IMR-90 (cell line): ENCODE measurements at regions of chr2 and their contacts with region 1.

Region 1: DNA sequence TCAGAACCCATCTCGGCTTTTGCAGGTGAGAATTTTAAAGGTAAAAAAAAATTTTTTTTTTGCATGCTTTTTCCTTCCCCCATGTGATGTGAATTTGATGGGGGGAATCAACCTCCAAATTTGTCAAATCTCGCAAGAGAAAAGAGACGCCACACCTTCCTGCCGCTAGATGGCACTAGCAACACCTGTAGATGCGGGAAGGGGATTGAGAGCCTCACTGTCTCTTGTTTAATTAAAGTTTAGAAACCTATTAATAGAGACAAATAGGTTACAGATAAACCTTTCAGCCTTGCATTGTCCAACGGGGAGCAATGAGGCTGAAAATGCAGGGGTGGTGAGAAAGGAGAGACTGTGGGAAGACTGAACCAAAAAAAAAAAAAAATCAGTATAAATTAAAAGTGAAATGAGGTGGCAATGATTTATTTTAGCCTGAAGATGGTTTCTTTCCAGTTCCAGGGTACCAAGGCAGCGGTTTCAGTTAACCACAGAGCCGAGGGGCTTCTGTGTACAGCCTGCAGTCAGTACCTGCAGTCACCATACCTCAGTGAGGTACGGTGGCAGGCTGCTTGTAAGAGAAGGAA is 84.6 kb downstream of the NRP2 start:
- DNase-seq: peak; percentile 72
- ATAC-seq: no peak
- H3K4me3 ChIP-seq: no peak overlapping the region
- H3K27ac ChIP-seq: no peak overlapping the region
- H3K4me1 ChIP-seq: peaks cover 33% of the 10 kb centered on the region
- H3K27me3 ChIP-seq: no peaks in the 10 kb centered on the region
- CTCF ChIP-seq: peak; percentile 85
- POLR2A ChIP-seq: no peak
- RAD21 ChIP-seq: peak; percentile 78

Region 2: GRCh38 chr2:205590759-205591158 is 176.1 kb before region 1 on chr2:
- CTCF ChIA-PET with region 1: no interaction called
- POLR2A ChIA-PET with region 1: no interaction called
- dilution Hi-C with region 1: no loop called
- in situ Hi-C with region 1: no loop called
- intact Hi-C with region 1: no loop called
- DNase-seq: peak; percentile 70
- ATAC-seq: peak; percentile 75
- H3K4me3 ChIP-seq: no peak overlapping the region
- H3K27ac ChIP-seq: no peak overlapping the region
- H3K4me1 ChIP-seq: peaks cover 10% of the 10 kb centered on the region
- H3K27me3 ChIP-seq: no peaks in the 10 kb centered on the region
- CTCF ChIP-seq: no peak
- POLR2A ChIP-seq: no peak
- RAD21 ChIP-seq: no peak

Region 3: GRCh38 chr2:205685314-205686055 is 81.4 kb before region 1 on chr2:
- CTCF ChIA-PET with region 1: no interaction called
- POLR2A ChIA-PET with region 1: no interaction called
- dilution Hi-C with region 1: no loop called
- in situ Hi-C with region 1: no loop called
- intact Hi-C with region 1: loop called (anchors 2 kb)
- DNase-seq: peak; percentile 67
- ATAC-seq: peak; percentile 33
- H3K4me3 ChIP-seq: peak overlapping the region; percentile 90
- H3K27ac ChIP-seq: peak overlapping the region; percentile 90
- H3K4me1 ChIP-seq: peaks cover 12% of the 10 kb centered on the region
- H3K27me3 ChIP-seq: no peaks in the 10 kb centered on the region
- CTCF ChIP-seq: 0 out of 2 replicates have a peak, but pooled peaks have one; percentile 1
- POLR2A ChIP-seq: peak; percentile 1; the same call in 1 of the 2 replicates
- RAD21 ChIP-seq: no peak; the same call in 1 of the 2 replicates

Region 4: DNA sequence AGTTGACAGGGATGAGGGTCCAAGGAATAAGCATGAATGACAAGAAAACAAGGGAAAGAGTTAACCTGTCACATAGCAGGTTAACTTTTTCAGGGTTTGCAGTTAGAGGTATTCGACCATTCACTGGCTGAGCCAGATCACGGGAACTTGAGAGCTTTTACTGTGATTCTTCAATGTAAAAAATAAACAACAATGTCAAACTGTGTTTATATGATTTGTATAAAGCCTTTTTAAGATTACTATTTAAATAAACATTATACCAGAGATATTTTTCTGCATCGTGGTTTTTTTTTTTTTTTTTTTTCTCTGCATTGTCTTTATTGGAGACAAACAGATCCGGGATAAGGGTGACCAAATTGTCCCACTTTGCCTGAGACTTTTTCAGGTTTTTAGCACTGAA is 31.0 kb after region 1 on chr2:
- CTCF ChIA-PET with region 1: no interaction called
- POLR2A ChIA-PET with region 1: interaction called, 11 read pairs
- dilution Hi-C with region 1: no loop called
- in situ Hi-C with region 1: no loop called
- intact Hi-C with region 1: no loop called
- DNase-seq: peak; percentile 52
- ATAC-seq: peak; percentile 44
- H3K4me3 ChIP-seq: no peak overlapping the region
- H3K27ac ChIP-seq: peak overlapping the region; percentile 95; the same call in 1 of the 2 replicates
- H3K4me1 ChIP-seq: peaks cover 28% of the 10 kb centered on the region
- H3K27me3 ChIP-seq: no peaks in the 10 kb centered on the region
- CTCF ChIP-seq: no peak
- POLR2A ChIP-seq: no peak
- RAD21 ChIP-seq: no peak

Region 5: DNA sequence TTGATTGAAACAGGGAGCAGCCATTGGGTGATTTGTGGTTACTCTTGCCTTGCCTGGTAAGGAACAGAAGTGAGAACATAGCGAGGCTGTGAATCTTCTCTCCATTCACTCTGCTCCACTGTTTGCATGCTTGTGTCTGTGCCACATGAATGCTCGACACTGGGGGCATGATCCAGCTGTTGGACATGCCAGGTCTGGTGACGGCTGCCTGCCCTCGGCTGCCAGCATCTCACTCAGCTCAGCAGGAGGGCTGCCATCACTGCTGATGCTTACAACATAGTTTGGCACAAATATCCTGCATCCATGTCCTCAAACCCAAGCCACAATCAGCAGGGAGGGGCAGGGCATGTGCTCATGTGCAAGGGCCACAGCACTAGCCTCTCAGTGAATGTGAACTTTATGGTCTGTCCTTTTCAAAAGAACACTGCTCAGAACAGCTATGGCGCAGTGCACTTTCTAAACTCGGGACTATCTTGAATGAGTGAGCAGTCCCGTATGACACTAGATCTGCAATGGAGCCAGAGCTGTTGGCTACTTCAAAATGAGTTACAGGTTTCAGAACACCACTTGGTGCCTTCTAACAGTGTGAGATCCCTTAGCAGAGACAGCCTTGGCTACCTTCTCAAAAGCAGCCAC is 41.7 kb after region 1 on chr2:
- CTCF ChIA-PET with region 1: no interaction called
- POLR2A ChIA-PET with region 1: no interaction called
- dilution Hi-C with region 1: no loop called
- in situ Hi-C with region 1: no loop called
- intact Hi-C with region 1: loop called (anchors 2 kb)
- DNase-seq: no peak
- ATAC-seq: peak; percentile 21
- H3K4me3 ChIP-seq: no peak overlapping the region
- H3K27ac ChIP-seq: no peak overlapping the region
- H3K4me1 ChIP-seq: peaks cover 3% of the 10 kb centered on the region; the same call in 1 of the 2 replicates
- H3K27me3 ChIP-seq: peaks cover 16% of the 10 kb centered on the region
- CTCF ChIP-seq: no peak
- POLR2A ChIP-seq: no peak
- RAD21 ChIP-seq: no peak

Region 6: GRCh38 chr2:205885492-205886099 is 118.7 kb after region 1 on chr2:
- CTCF ChIA-PET with region 1: no interaction called
- POLR2A ChIA-PET with region 1: no interaction called
- dilution Hi-C with region 1: no loop called
- in situ Hi-C with region 1: loop called (anchors 10 kb)
- intact Hi-C with region 1: loop called (anchors 1 kb)
- DNase-seq: peak; percentile 72
- ATAC-seq: peak; percentile 94
- H3K4me3 ChIP-seq: no peak overlapping the region
- H3K27ac ChIP-seq: no peak overlapping the region
- H3K4me1 ChIP-seq: no peaks in the 10 kb centered on the region
- H3K27me3 ChIP-seq: peaks cover 6% of the 10 kb centered on the region
- CTCF ChIP-seq: peak; percentile 93
- POLR2A ChIP-seq: no peak
- RAD21 ChIP-seq: peak; percentile 95

Region 7: GRCh38 chr2:205925373-205926337 is 158.8 kb after region 1 on chr2:
- CTCF ChIA-PET with region 1: interaction called, 4 read pairs
- POLR2A ChIA-PET with region 1: no interaction called
- dilution Hi-C with region 1: no loop called
- in situ Hi-C with region 1: no loop called
- intact Hi-C with region 1: loop called (anchors 2 kb)
- DNase-seq: peak; percentile 51
- ATAC-seq: peak; percentile 97
- H3K4me3 ChIP-seq: peak overlapping the region; percentile 12; the same call in 1 of the 2 replicates
- H3K27ac ChIP-seq: no peak overlapping the region
- H3K4me1 ChIP-seq: no peaks in the 10 kb centered on the region; the same call in 1 of the 2 replicates
- H3K27me3 ChIP-seq: peaks cover 42% of the 10 kb centered on the region
- CTCF ChIP-seq: peak; percentile 91
- POLR2A ChIP-seq: no peak
- RAD21 ChIP-seq: peak; percentile 93

Region 8: DNA sequence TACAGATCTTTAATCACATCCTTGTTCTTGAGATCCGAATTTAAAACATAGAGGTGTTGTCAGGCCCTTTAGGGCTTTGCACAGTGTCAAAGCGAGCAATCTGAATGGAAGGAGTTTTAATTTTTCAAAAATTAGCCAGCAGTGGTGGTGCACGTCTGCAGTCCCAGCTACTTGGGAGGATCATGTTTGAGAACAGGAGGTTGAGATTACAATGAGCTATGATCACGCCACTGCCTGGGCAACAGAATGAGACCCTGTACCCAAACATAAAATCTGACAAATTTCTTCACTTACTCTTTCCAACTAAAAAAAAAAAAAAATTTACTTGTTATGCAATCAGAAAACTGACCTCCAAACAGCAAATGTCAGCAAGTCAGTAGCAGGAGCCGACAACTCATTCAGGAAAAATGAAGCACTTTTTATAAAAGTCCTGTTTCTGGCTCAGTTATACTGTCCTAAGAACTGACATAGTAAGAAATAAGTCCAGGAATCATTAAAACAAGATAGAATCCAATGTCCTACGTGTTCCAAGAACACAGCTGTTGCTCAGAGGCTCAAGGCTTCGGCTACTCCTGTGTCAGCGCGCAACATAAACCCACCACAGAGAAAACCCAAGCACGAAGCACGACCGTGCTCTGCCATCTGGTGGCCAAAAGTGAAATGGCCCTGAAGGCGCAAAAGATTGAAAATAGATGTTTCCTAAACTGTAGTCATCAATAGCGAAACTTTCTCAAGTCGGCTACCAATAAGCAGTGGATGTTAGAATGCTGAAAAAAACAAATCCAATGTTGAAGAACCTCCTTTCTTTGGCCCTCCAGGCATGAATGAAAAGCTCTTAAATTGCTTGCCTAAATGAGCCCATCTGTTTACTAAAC is 181.0 kb after region 1 on chr2:
- CTCF ChIA-PET with region 1: no interaction called
- POLR2A ChIA-PET with region 1: no interaction called
- dilution Hi-C with region 1: no loop called
- in situ Hi-C with region 1: no loop called
- intact Hi-C with region 1: loop called (anchors 2 kb)
- DNase-seq: peak; percentile 78
- ATAC-seq: peak; percentile 97
- H3K4me3 ChIP-seq: no peak overlapping the region
- H3K27ac ChIP-seq: no peak overlapping the region
- H3K4me1 ChIP-seq: no peaks in the 10 kb centered on the region; the same call in 1 of the 2 replicates
- H3K27me3 ChIP-seq: peaks cover 5% of the 10 kb centered on the region; the same call in 1 of the 2 replicates
- CTCF ChIP-seq: peak; percentile 95
- POLR2A ChIP-seq: no peak
- RAD21 ChIP-seq: peak; percentile 79

Region 9: DNA sequence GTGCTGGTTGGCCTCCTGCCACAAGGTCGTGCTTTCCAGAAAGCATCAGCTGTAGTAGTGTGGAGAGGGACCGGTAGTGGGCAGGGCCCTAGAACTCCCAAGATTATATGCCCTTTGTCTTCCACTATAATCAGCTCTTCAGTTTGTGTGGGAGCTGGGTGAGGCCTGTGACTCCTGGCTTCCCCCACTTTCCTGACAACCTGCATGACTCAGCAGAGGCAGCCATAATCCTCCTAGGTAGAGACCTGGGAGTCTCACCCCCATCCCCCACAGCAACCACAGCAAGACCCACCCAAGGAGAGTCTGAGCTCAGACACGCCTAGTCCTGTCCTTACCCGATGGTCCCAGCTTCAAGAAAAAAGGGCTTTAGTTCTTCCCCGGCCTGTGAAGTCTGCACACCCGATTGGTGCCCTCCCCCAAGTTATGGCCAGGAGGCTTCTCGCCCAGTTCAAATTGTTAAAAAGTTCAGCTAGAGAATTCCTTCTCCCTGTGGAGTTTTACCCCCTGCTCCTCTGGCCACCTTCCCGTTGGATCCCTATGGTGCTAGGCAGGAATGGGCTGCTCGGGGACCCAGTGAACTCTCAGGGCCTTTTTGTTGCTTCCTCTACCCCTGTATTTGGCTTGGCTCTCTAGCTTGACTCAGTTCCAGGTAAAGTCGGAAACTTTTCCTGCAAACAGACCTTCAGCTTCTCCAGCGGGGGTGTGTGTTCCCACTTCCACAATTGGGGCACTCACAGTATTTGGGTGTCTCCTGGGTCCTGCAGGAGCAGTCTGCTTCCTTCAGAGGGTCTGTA is 817.7 kb after region 1 on chr2:
- CTCF ChIA-PET with region 1: no interaction called
- POLR2A ChIA-PET with region 1: no interaction called
- dilution Hi-C with region 1: no loop called
- in situ Hi-C with region 1: no loop called
- intact Hi-C with region 1: no loop called
- DNase-seq: no peak
- ATAC-seq: no peak
- H3K4me3 ChIP-seq: no peak overlapping the region
- H3K27ac ChIP-seq: no peak overlapping the region
- H3K4me1 ChIP-seq: no peaks in the 10 kb centered on the region
- H3K27me3 ChIP-seq: no peaks in the 10 kb centered on the region
- CTCF ChIP-seq: no peak
- POLR2A ChIP-seq: no peak
- RAD21 ChIP-seq: no peak